Common myeloid progenitor, CD34-positive (primary cell): ENCODE measurements at regions of chr10 and their contacts with region 1.

Region 1: DNA sequence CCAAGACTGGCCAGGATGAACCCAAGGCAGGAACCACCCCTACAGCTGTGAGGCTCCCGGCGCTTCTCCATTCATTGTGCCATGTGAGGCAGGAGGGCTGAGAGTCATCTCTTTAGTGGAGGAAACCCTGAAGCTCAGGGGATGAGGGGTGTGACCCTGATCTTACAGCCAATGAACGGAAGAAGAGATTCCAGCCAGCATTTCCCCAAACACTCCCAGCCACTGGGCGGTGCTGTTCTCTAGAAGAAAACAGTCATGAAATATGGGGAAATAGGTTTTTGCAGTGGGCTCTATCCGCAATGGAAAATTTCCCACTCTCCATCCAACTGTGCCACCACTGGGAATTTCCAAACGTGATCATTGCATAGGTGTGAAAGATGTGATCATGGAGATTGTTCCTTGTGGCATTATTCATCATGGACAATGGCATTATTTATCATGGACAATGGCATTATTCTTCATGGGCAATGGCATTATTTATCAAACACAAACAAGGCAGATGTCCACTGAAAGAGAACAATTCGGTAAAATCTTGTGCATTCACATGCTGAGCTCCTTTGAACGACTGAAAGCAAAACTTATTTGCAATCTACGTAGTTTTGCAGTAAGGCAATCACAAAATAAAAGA is 14.0 kb upstream of the SLC18A2 start:
- DNase-seq: peak; percentile 69 to 83 (median 79)
- H3K4me3 ChIP-seq: no peak overlapping the region
- H3K27ac ChIP-seq: no peak overlapping the region
- H3K4me1 ChIP-seq: no peaks in the 10 kb centered on the region
- H3K27me3 ChIP-seq: peaks cover 0 to 3% (median 0%) of the 10 kb centered on the region in 5 experiments

Region 2: DNA sequence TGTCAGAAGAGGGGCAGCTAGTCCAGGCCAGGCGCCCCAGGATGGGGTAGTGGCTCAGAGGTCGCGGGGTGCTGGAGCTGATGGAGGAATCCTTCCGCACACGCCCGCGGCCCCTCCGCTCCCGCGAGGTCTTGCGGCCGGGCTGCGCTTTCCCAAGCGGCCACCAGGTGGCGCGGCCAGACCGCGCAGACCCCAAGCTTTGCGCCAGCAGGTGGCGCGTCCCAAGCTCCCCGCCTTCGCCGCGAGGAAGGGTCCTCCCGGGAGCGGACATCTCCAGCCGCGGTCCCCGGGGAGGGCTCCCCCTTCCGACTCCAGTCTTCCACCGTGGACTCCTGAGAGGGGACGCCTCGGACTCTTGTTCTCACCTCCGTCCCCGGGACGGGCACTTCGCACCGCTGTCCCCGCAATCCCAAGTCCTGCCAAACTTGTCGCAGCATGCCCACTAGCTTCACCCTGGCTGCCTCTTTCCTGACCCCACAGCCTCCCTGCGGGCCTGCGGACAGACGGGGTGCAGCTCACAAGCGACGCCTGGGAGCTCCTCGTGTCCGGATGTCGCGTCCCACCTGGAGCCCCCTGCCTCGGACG is 10.2 kb before region 1 on chr10:
- CTCF ChIA-PET with region 1: interaction called, 37 read pairs
- POLR2A ChIA-PET with region 1: no interaction called
- DNase-seq: peak; percentile 80 to 85 (median 82)
- H3K4me3 ChIP-seq: peak overlapping the region; percentile 19 to 82 (median 67)
- H3K27ac ChIP-seq: no peak overlapping the region
- H3K4me1 ChIP-seq: peaks cover 0 to 16% (median 14%) of the 10 kb centered on the region in 4 experiments
- H3K27me3 ChIP-seq: peaks cover 0 to 40% (median 24%) of the 10 kb centered on the region in 5 experiments

Region 3: GRCh38 chr10:117241541-117242462 is 14.9 kb after region 1 on chr10:
- CTCF ChIA-PET with region 1: interaction called, 12 read pairs
- POLR2A ChIA-PET with region 1: no interaction called
- DNase-seq: peak; percentile 60 to 82 (median 67)
- H3K4me3 ChIP-seq: peak overlapping the region; percentile 49 to 76 (median 60)
- H3K27ac ChIP-seq: no peak overlapping the region
- H3K4me1 ChIP-seq: peaks cover 0 to 26% (median 25%) of the 10 kb centered on the region in 4 experiments
- H3K27me3 ChIP-seq: peaks cover 0 to 12% (median 0%) of the 10 kb centered on the region in 5 experiments

Region 4: DNA sequence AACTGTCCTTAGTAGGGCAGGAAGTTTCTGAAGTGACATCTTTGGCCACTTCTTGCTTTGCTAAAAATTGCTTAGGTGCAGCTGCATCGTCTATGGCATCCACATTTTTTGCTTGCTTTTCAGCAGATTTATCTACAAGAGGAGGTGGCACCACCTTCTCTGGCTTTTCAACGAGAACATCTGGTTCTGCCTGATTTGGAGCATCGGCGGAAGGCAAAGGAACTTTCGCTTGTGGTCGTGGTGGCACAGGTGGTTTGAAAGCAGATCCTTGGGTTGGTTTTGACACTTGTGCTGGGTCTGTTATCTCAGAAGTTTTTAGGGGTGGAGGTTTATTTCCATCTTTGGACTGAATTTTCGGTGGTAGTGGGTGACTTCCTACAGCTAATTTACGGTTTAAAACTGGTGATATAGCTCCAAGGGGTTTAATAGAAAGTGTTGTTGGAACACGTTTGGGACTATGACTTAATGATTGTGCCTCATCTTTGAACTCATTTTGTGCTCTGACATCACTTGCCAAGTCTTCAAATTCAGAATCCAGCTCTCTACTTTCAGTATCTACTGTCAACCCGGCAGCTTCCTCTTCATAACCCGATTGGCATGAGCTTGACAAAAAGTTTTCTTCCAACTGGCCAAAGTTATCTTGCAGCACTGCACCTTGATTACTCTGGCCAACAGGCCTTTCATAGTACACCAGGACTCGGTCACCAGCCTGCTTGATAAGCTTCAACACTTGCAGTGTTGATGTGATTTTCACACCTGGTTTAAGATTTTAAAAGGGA is 58.0 kb after region 1 on chr10:
- CTCF ChIA-PET with region 1: interaction called, 24 read pairs
- POLR2A ChIA-PET with region 1: no interaction called
- DNase-seq: peak in 2 of 3 donors; percentile 40 to 61
- H3K4me3 ChIP-seq: no peak overlapping the region
- H3K27ac ChIP-seq: no peak overlapping the region
- H3K4me1 ChIP-seq: no peaks in the 10 kb centered on the region
- H3K27me3 ChIP-seq: no peaks in the 10 kb centered on the region

Region 5: GRCh38 chr10:117342641-117343040 is 115.7 kb after region 1 on chr10:
- CTCF ChIA-PET with region 1: no interaction called
- POLR2A ChIA-PET with region 1: no interaction called
- DNase-seq: no peak
- H3K4me3 ChIP-seq: peak overlapping the region in 1 of 7 experiments; percentile 19
- H3K27ac ChIP-seq: peak overlapping the region in 1 of 2 experiments; percentile 40
- H3K4me1 ChIP-seq: peaks cover 4 to 46% (median 22%) of the 10 kb centered on the region in 4 experiments
- H3K27me3 ChIP-seq: no peaks in the 10 kb centered on the region